ENCODE measurements at regions of chr1 and their contacts with region 1.

Region 1: DNA sequence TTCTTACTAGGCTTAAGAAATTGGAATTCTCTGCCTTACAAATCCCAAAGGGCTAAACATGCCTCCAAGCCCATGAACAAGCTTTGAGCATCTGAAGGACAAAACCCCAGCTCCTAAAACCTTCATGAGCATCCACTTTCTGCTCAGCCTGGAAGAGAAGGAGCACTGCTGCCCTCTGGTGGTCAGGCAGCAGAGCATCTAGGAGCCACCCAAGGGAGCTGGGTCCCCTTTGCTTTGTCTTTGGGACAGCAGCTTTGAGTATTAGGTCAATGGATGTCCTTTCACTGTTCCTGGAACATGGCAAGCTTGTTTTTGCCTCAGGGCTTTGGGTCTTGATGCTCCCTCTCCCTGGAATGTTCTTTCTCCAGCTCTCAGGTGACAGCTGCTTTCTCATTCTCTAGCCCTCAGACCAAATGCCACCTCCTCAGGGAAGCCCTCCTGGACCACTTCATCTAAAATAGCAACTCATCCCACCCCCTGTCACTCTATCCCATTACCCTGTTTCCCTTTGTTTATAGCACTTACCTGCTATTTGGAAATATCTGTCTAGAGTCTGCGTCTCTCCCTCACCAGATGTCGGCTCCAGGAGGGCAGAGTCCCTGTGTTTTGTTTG is 25.7 kb downstream of the RAB7B start:
- DNase-seq: peak; percentile 80
- CTCF ChIP-seq: peak; percentile 95

Region 2: DNA sequence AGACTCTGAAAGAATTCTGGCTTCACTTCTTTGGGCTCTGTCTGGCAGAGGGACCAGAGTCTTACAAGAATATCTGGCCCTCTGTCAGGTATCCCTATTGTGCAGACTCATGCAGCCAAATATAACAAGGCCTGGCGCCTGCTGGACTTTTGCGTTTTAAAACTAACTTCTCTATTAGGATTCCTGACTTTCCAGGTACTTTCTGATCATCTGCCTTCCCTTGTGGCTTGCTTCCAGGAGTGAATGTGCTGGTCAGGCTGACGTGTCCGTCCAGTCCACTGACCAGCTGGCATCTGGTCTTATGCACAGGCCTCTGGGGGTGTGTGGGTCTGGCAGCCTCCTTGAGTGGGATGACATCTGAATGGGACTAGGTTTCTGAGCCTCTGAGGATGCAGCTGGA is 193.6 kb before region 1 on chr1:
- CTCF ChIA-PET with region 1: interaction called, 14 read pairs
- POLR2A ChIA-PET with region 1: interaction called, 5 read pairs
- DNase-seq: no peak
- CTCF ChIP-seq: no peak

Region 3: DNA sequence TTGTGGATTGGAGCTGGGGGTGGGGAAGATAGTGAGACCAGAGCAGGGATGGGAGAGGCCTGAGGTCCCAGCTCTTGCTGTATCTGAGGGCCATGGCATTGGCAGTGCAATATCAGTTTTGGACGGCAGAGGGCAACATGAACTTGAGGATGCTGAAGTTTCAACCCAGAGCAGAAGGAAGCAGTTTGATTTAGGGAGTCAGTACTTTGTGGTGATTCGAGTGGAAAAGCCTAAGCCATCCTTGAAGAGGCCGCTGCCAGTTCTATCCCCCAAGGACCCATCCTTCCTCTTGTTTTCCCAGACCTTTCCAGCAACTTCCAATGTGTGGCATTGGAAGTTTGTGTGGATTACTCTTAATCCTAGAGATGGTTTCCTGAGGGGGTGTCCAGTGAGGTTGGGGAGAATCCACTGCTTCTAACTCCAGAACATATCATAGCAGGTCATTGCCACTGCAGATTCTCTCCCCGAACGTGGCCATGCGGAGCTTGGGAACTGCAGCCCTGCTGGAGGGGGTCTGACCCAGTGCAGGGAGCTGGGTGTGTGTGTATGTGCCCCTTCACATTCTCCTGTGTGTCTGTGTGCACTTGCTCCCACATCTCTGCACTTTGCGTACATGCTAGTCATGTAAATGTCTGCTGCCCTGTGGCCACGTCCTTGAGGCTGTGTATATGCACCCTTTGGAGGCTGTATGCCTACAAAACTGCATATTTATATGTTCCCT is 58.3 kb before region 1 on chr1:
- CTCF ChIA-PET with region 1: interaction called, 228 read pairs
- POLR2A ChIA-PET with region 1: no interaction called
- DNase-seq: peak; percentile 78
- CTCF ChIP-seq: peak; percentile 94

Region 4: GRCh38 chr1:205961405-205961804 is 16.1 kb before region 1 on chr1:
- CTCF ChIA-PET with region 1: interaction called, 62 read pairs
- POLR2A ChIA-PET with region 1: no interaction called
- DNase-seq: peak; percentile 57
- CTCF ChIP-seq: no peak

Region 5: GRCh38 chr1:206030714-206031113 is 53.2 kb after region 1 on chr1:
- CTCF ChIA-PET with region 1: interaction called, 31 read pairs
- POLR2A ChIA-PET with region 1: no interaction called
- DNase-seq: peak; percentile 62
- CTCF ChIP-seq: peak; percentile 92

Measured in GM10248 (cell line).